ENCODE measurements at regions of chr18 and their contacts with region 1.

Region 1: GRCh38 chr18:12376718-12377555 is at the start of gene AFG3L2:
- DNase-seq: peak; percentile 72 to 100 (median 100)
- ATAC-seq: peak; percentile 96 to 97
- H3K4me3 ChIP-seq: peak within 1 kb of the TSS; percentile 72
- H3K27ac ChIP-seq: peak within 1 kb of the TSS; percentile 96
- H3K4me1 ChIP-seq: peaks cover 8% of the 10 kb centered on the region
- H3K27me3 ChIP-seq: no peaks in the 10 kb centered on the region
- total RNA-seq, gene AFG3L2: 73.1 to 88.4 (median 80.2) TPM

Region 2: DNA sequence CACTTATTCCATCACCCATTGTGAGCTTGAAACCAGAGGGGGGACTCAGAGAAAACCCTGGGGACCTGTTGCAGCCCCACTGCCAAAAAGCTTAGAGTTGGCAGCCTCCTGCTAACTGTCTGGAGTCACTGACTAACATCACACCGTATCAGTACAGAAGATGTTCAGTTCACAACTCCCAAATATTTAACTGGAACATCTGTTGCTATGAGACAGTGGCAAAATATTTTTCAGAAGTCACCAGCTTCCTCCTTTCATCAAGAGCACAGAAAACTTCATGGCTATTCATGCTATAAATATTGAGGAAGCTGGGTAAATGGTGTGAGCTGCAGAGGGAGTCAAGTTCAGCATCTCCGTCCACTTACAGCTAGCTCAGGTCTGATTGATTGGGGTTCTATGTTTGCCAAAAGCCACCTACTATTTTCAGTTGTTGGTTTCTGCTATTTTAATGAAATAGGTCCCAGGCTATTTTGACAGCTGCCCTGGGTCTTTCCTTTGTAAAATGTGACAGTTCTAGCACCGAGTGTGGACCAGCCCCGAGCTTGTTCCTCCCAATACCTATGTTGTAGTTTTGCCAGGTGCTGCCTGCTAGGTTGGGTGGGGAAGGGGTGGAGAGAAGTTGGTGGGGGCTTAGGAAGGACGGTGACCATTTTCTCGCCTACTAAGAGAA is 59.1 kb before region 1 on chr18:
- intact Hi-C with region 1: loop called in 1 of 4 experiments (anchors 10 kb)
- DNase-seq: no peak
- ATAC-seq: peak; percentile 74 to 79
- H3K4me3 ChIP-seq: no peak overlapping the region
- H3K27ac ChIP-seq: peak overlapping the region; percentile 84
- H3K4me1 ChIP-seq: peaks cover 10% of the 10 kb centered on the region
- H3K27me3 ChIP-seq: no peaks in the 10 kb centered on the region

Measured in right cardiac atrium (tissue), 5 donors.